Common myeloid progenitor, CD34-positive (primary cell): ENCODE measurements at regions of chr6 and their contacts with region 1.

Region 1: GRCh38 chr6:4906293-4907276 is 97.3 kb downstream of the RPP40 start:
- DNase-seq: peak in 2 of 3 donors; percentile 46 to 56
- H3K4me3 ChIP-seq: peak overlapping the region in 6 of 7 experiments; percentile 10 to 79 (median 59)
- H3K27ac ChIP-seq: peak overlapping the region; percentile 25 to 74
- H3K4me1 ChIP-seq: peaks cover 21 to 41% (median 29%) of the 10 kb centered on the region in 4 experiments
- H3K27me3 ChIP-seq: no peaks in the 10 kb centered on the region

Region 2: GRCh38 chr6:4928426-4928825 is 21.8 kb after region 1 on chr6:
- CTCF ChIA-PET with region 1: interaction called, 15 read pairs
- POLR2A ChIA-PET with region 1: no interaction called
- DNase-seq: peak; percentile 67 to 94 (median 81)
- H3K4me3 ChIP-seq: no peak overlapping the region
- H3K27ac ChIP-seq: no peak overlapping the region
- H3K4me1 ChIP-seq: peaks cover 2 to 29% (median 15%) of the 10 kb centered on the region in 4 experiments
- H3K27me3 ChIP-seq: no peaks in the 10 kb centered on the region